PC-3 (cell line): ENCODE measurements at regions of chr6 and their contacts with region 1.

Region 1: GRCh38 chr6:31068669-31069340 is 43.6 kb downstream of the C6orf15 start:
- DNase-seq: peak; percentile 90
- ATAC-seq: peak; percentile 66
- H3K4me3 ChIP-seq: no peak overlapping the region
- H3K27ac ChIP-seq: no peak overlapping the region
- H3K4me1 ChIP-seq: peaks cover 10% of the 10 kb centered on the region
- H3K27me3 ChIP-seq: no peaks in the 10 kb centered on the region
- CTCF ChIP-seq: peak; percentile 97

Region 2: GRCh38 chr6:30828027-30828960 is 240.5 kb before region 1 on chr6:
- CTCF ChIA-PET with region 1: interaction called, 8 read pairs
- POLR2A ChIA-PET with region 1: no interaction called
- intact Hi-C with region 1: loop called (anchors 2 kb)
- DNase-seq: peak; percentile 94
- ATAC-seq: peak; percentile 91
- H3K4me3 ChIP-seq: no peak overlapping the region
- H3K27ac ChIP-seq: peak overlapping the region; percentile 80
- H3K4me1 ChIP-seq: peaks cover 36% of the 10 kb centered on the region
- H3K27me3 ChIP-seq: no peaks in the 10 kb centered on the region
- CTCF ChIP-seq: peak; percentile 95

Region 3: DNA sequence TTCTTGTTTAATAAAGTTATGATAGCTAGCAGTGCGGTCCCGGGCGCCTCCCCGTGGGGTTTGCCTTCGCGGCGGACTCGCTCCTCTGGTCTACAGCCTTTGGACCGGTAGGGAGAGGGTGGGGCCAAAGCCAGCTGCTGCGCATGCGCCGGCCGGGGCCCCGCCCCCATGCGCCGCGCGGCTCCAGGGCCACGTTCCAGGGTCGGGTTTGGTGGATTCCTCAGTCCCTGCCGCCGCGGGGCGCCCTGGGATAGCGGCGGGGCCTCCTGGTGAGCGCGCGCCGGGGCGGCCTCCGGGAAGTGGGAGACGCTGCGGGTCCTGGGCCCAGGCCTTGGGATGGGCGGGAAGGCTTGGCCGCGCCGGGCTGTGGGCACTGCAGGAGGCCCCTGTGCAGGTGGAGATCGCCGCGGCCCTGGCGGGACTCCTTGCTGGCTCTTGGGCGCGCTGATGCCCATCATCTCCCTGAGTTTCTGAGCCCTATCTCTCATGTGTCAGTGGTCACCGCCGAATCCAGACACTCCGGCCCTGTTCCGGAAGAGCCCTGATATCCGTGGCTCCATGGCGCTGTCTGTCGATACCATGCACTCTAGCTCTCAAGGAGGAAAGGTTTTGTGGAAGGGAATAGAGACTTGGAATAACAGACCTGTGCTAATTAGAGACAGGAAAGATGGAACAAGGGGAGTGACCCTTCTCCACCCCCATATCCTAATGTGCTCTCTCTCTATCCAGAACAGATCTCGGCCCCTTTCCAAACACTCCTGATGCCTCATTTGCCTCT is 154.5 kb before region 1 on chr6 and contains the start of gene VARS2:
- CTCF ChIA-PET with region 1: interaction called, 48 read pairs
- POLR2A ChIA-PET with region 1: interaction called, 8 read pairs
- intact Hi-C with region 1: loop called (anchors 1 kb)
- DNase-seq: peak; percentile 97
- ATAC-seq: peak; percentile 87
- H3K4me3 ChIP-seq: peak within 1 kb of the TSS; percentile 67
- H3K27ac ChIP-seq: peak within 1 kb of the TSS; percentile 51
- H3K4me1 ChIP-seq: peaks cover 28% of the 10 kb centered on the region
- H3K27me3 ChIP-seq: no peaks in the 10 kb centered on the region
- CTCF ChIP-seq: peak; percentile 50
- total RNA-seq, gene VARS2: 66.5 and 87.8 TPM in 2 replicates

Region 4: GRCh38 chr6:30942338-30943060 is 126.3 kb before region 1 on chr6:
- CTCF ChIA-PET with region 1: interaction called, 31 read pairs
- POLR2A ChIA-PET with region 1: interaction called, 3 read pairs
- intact Hi-C with region 1: loop called (anchors 2 kb)
- DNase-seq: peak; percentile 96
- ATAC-seq: peak; percentile 94
- H3K4me3 ChIP-seq: no peak overlapping the region
- H3K27ac ChIP-seq: no peak overlapping the region
- H3K4me1 ChIP-seq: peaks cover 9% of the 10 kb centered on the region; the same call in 1 of the 2 replicates
- H3K27me3 ChIP-seq: no peaks in the 10 kb centered on the region
- CTCF ChIP-seq: peak; percentile 80

Region 5: DNA sequence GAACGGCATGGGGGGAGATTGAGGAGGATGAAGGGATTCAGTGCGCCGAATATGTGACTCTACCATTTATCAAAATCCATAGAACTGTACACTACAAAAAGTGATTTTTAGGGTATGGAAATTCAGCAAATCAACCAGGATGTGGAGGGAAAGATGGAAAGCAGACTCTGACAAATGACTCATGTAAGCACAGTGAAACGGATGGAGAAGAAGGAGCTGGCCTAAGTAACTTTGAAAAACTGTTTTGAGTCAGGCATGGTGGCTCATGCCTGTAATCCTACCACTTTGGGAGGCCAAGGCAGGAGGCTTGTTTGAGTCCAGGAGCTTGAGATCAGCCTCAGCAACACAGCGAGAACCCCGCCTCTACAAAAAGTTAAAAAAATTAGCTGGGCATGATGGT is 19.3 kb before region 1 on chr6:
- CTCF ChIA-PET with region 1: interaction called, 3 read pairs
- POLR2A ChIA-PET with region 1: no interaction called
- intact Hi-C with region 1: loop called (anchors 2 kb)
- DNase-seq: no peak
- ATAC-seq: no peak
- H3K4me3 ChIP-seq: no peak overlapping the region
- H3K27ac ChIP-seq: no peak overlapping the region
- H3K4me1 ChIP-seq: peaks cover 7% of the 10 kb centered on the region
- H3K27me3 ChIP-seq: no peaks in the 10 kb centered on the region
- CTCF ChIP-seq: no peak

Region 6: GRCh38 chr6:31079656-31080261 is 11.0 kb after region 1 on chr6:
- CTCF ChIA-PET with region 1: interaction called, 19 read pairs
- POLR2A ChIA-PET with region 1: no interaction called
- intact Hi-C with region 1: no loop called
- DNase-seq: peak; percentile 87
- ATAC-seq: peak; percentile 82
- H3K4me3 ChIP-seq: no peak overlapping the region
- H3K27ac ChIP-seq: no peak overlapping the region
- H3K4me1 ChIP-seq: no peaks in the 10 kb centered on the region
- H3K27me3 ChIP-seq: no peaks in the 10 kb centered on the region
- CTCF ChIP-seq: peak; percentile 91